ENCODE measurements at regions of chr2 and their contacts with region 1.

Region 1: GRCh38 chr2:39913648-39914461 is 134.8 kb upstream of the THUMPD2 start:
- DNase-seq: no peak
- ATAC-seq: peak; percentile 68 to 72
- H3K4me3 ChIP-seq: no peak overlapping the region
- H3K27ac ChIP-seq: no peak overlapping the region
- H3K4me1 ChIP-seq: no peaks in the 10 kb centered on the region
- H3K27me3 ChIP-seq: no peaks in the 10 kb centered on the region

Region 2: GRCh38 chr2:40554668-40555285 is 640.9 kb after region 1 on chr2:
- intact Hi-C with region 1: loop called in 2 of 4 experiments (anchors 5 to 10 kb)
- DNase-seq: peak; percentile 58 to 80 (median 59)
- ATAC-seq: peak; percentile 76 to 86
- H3K4me3 ChIP-seq: no peak overlapping the region
- H3K27ac ChIP-seq: no peak overlapping the region
- H3K4me1 ChIP-seq: peaks cover 5% of the 10 kb centered on the region
- H3K27me3 ChIP-seq: no peaks in the 10 kb centered on the region

Region 3: DNA sequence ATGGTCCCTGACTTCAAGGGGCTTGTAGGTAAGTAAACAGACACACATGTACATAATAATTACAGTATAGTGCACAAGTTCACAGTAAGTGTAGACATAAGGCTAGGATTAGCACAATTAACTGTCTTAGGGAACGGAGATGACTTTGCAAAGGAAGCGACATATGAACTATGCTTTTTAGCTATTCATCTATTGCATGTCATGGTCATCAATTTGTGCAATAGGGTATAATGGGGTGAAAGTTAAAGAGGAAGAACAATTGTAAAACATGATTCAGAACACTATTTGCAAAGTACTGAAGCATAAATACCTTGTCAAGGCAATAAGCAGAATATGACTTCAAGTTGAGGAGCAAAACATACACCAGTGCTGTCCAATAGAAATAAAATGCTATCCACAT is 650.3 kb after region 1 on chr2:
- intact Hi-C with region 1: loop called in 2 of 4 experiments (anchors 10 kb)
- DNase-seq: no peak
- ATAC-seq: no peak
- H3K4me3 ChIP-seq: no peak overlapping the region
- H3K27ac ChIP-seq: no peak overlapping the region
- H3K4me1 ChIP-seq: no peaks in the 10 kb centered on the region
- H3K27me3 ChIP-seq: no peaks in the 10 kb centered on the region

Region 4: DNA sequence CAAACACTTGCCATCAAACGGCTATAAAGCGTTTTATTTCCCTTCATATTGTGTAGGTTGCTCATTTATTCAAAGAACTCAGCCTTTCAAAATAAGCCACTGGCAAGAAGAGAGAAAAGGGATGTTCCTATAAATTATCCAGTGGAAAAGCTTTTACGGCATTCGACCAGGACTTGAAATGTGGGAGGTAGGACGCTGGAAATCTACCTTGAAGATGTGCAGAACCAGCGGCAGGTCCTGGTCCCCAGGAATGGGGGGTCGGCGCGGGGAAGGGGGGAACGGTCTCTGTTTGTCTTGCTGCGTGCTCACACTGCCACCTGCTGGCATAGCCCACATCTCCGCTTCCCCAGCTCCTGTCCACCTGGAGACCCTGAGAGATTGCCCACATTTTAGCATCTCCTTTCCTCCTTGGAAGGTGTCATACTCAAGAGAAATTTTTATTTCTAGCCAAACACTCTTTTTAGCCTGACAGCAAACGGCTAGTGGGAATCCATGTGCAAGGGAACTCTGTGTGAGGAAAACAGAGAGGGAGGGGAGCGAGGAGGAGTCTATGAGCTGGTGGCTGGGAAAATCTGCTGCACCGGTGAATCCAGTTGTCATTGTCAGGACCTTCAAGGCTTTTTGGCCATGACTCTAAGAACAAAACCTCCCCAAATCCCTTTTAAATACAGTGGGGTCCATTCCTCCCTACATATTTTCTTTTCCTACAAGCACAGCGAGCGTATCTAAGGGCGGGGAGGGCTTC is 1785.0 kb after region 1 on chr2:
- intact Hi-C with region 1: loop called in 2 of 4 experiments (anchors 5 to 10 kb)
- DNase-seq: peak; percentile 45 to 86 (median 78)
- ATAC-seq: peak; percentile 64 to 73
- H3K4me3 ChIP-seq: no peak overlapping the region
- H3K27ac ChIP-seq: no peak overlapping the region
- H3K4me1 ChIP-seq: no peaks in the 10 kb centered on the region
- H3K27me3 ChIP-seq: no peaks in the 10 kb centered on the region

Region 5: GRCh38 chr2:41782306-41783158 is 1868.7 kb after region 1 on chr2:
- intact Hi-C with region 1: loop called in 1 of 4 experiments (anchors 10 kb)
- DNase-seq: no peak
- ATAC-seq: peak in 1 of 2 donors; percentile 28
- H3K4me3 ChIP-seq: no peak overlapping the region
- H3K27ac ChIP-seq: no peak overlapping the region
- H3K4me1 ChIP-seq: no peaks in the 10 kb centered on the region
- H3K27me3 ChIP-seq: no peaks in the 10 kb centered on the region

Measured in right cardiac atrium (tissue), 5 donors.